Transverse colon (tissue), 4 donors: ENCODE measurements at regions of chr2 and their contacts with region 1.

Region 1: GRCh38 chr2:230987137-230988020 is 8.5 kb upstream of the SPATA3 start:
- DNase-seq: peak; percentile 84
- H3K4me3 ChIP-seq: peak overlapping the region in 3 of 4 donors; percentile 28 to 45 (median 30)
- H3K27ac ChIP-seq: no peak overlapping the region
- H3K4me1 ChIP-seq: peaks cover 0 to 6% (median 5%) of the 10 kb centered on the region in 4 donors
- H3K27me3 ChIP-seq: peaks cover 19% of the 10 kb centered on the region
- CTCF ChIP-seq: peak; percentile 88 to 97 (median 93)
- EP300 ChIP-seq: no peak
- POLR2A ChIP-seq: no peak

Region 2: DNA sequence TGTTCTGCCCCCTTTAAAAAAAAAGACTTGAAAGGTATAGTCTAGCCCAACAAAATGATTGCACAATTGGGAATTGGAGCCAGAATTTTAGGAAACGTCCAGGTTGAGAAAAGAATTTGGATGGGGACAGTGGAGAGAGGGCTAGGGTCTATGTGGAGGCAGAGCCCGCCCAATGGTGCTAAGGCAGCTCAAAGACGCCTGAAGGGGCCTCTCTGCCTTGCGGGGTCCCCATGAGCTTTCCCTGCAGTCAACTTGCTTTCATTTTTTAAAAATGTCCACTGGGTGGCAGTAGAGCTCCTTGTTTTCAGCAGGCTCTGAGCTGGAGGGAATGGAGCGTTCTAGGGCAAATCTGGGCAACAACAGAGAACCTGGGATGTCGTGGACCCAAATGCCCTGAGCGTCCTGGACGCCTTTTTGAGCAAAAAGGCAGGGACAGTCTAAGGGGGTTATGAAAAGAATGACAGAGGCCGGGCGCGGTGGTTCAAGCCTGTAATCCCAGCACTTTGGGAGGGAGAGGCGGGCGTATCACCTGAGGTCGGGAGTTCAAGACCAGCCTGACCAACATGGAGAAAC is 162.9 kb before region 1 on chr2:
- in situ Hi-C with region 1: loop called in 2 of 4 experiments (anchors 10 kb)
- intact Hi-C with region 1: no loop called
- DNase-seq: peak; percentile 45
- H3K4me3 ChIP-seq: peak overlapping the region in 2 of 4 donors; percentile 17 to 23
- H3K27ac ChIP-seq: no peak overlapping the region
- H3K4me1 ChIP-seq: peaks cover 0 to 16% (median 12%) of the 10 kb centered on the region in 4 donors
- H3K27me3 ChIP-seq: peaks cover 35% of the 10 kb centered on the region
- CTCF ChIP-seq: peak; percentile 64 to 80 (median 76)
- EP300 ChIP-seq: no peak
- POLR2A ChIP-seq: no peak

Region 3: GRCh38 chr2:230830428-230830827 is 157.0 kb before region 1 on chr2:
- in situ Hi-C with region 1: loop called in 3 of 4 experiments (anchors 5 to 10 kb)
- intact Hi-C with region 1: loop called (anchors 5 kb)
- DNase-seq: no peak
- H3K4me3 ChIP-seq: no peak overlapping the region
- H3K27ac ChIP-seq: no peak overlapping the region
- H3K4me1 ChIP-seq: peaks cover 0 to 9% (median 8%) of the 10 kb centered on the region in 4 donors
- H3K27me3 ChIP-seq: peaks cover 35% of the 10 kb centered on the region
- CTCF ChIP-seq: no peak
- EP300 ChIP-seq: no peak
- POLR2A ChIP-seq: no peak

Region 4: GRCh38 chr2:230847883-230848388 is 139.4 kb before region 1 on chr2:
- in situ Hi-C with region 1: no loop called
- intact Hi-C with region 1: loop called (anchors 5 kb)
- DNase-seq: peak; percentile 95
- H3K4me3 ChIP-seq: peak overlapping the region in 1 of 4 donors; percentile 8
- H3K27ac ChIP-seq: peak overlapping the region in 1 of 4 donors; percentile 28
- H3K4me1 ChIP-seq: peaks cover 0 to 12% (median 7%) of the 10 kb centered on the region in 4 donors
- H3K27me3 ChIP-seq: peaks cover 7% of the 10 kb centered on the region
- CTCF ChIP-seq: peak; percentile 89 to 94 (median 91)
- EP300 ChIP-seq: no peak
- POLR2A ChIP-seq: no peak

Region 5: DNA sequence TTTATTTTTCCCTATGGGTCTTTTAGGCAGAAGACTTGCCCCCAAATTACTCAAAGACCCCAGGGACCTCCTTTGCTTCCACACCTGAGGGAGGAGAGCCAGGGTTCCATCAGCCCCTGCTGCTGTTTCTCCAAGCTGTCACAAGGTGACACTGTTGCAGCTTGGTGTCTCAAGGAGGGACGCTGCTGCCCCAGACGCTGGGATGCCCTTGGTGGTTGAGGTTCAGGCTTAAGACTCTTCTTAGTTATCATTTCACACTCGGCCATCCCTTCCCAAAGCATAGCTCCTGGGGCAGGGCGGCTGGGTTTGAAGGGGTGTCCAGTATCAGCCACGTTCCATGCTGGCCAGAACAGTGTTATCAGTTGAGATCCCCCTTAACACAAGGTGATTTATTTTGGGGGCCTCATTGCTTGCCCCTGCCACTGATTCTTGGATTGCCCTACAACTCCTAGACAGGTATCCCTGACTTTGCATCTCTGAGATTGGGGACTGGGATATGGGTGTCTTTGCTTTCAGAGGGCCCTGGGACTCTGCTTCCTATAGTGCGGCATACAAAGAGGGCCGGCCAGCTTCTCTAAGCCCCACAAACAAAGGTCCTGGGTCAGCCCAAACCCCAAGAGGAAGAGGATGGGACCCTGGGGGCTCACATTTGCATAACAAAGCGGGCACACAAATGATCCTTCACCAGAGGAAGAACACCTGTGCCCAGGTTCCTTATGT is 85.0 kb before region 1 on chr2:
- in situ Hi-C with region 1: loop called in 1 of 4 experiments (anchors 10 kb)
- intact Hi-C with region 1: no loop called
- DNase-seq: peak; percentile 50
- H3K4me3 ChIP-seq: no peak overlapping the region
- H3K27ac ChIP-seq: no peak overlapping the region
- H3K4me1 ChIP-seq: no peaks in the 10 kb centered on the region
- H3K27me3 ChIP-seq: no peaks in the 10 kb centered on the region
- CTCF ChIP-seq: peak; percentile 34 to 70 (median 61)
- EP300 ChIP-seq: no peak
- POLR2A ChIP-seq: no peak

Region 6: GRCh38 chr2:231037731-231038482 is 50.5 kb after region 1 on chr2:
- in situ Hi-C with region 1: no loop called
- intact Hi-C with region 1: no loop called
- DNase-seq: peak; percentile 44
- H3K4me3 ChIP-seq: peak overlapping the region; percentile 18 to 64 (median 54)
- H3K27ac ChIP-seq: peak overlapping the region in 3 of 4 donors; percentile 60 to 67 (median 62)
- H3K4me1 ChIP-seq: peaks cover 0 to 48% (median 15%) of the 10 kb centered on the region in 4 donors
- H3K27me3 ChIP-seq: peaks cover 49% of the 10 kb centered on the region
- CTCF ChIP-seq: no peak
- EP300 ChIP-seq: no peak
- POLR2A ChIP-seq: no peak

Region 7: GRCh38 chr2:231104115-231104713 is 116.8 kb after region 1 on chr2:
- in situ Hi-C with region 1: no loop called
- intact Hi-C with region 1: no loop called
- DNase-seq: peak; percentile 75
- H3K4me3 ChIP-seq: no peak overlapping the region
- H3K27ac ChIP-seq: peak overlapping the region; percentile 54 to 60 (median 58)
- H3K4me1 ChIP-seq: peaks cover 3 to 37% (median 20%) of the 10 kb centered on the region in 4 donors
- H3K27me3 ChIP-seq: no peaks in the 10 kb centered on the region
- CTCF ChIP-seq: peak; percentile 83 to 91 (median 85)
- EP300 ChIP-seq: no peak
- POLR2A ChIP-seq: no peak